Lower leg skin (tissue), 4 donors: ENCODE measurements at regions of chr10 and their contacts with region 1.

Region 1: GRCh38 chr10:47104786-47105385 is 193.7 kb downstream of the PTPN20 start:
- DNase-seq: peak in 1 of 2 donors; percentile 41
- H3K4me3 ChIP-seq: no peak overlapping the region
- CTCF ChIP-seq: no peak
- POLR2A ChIP-seq: no peak

Region 2: GRCh38 chr10:47076949-47077361 is 27.9 kb before region 1 on chr10:
- intact Hi-C with region 1: loop called (anchors 2 kb)
- DNase-seq: no peak
- H3K4me3 ChIP-seq: no peak overlapping the region
- CTCF ChIP-seq: no peak
- POLR2A ChIP-seq: no peak